ENCODE measurements at regions of chr1 and their contacts with region 1.

Region 1: DNA sequence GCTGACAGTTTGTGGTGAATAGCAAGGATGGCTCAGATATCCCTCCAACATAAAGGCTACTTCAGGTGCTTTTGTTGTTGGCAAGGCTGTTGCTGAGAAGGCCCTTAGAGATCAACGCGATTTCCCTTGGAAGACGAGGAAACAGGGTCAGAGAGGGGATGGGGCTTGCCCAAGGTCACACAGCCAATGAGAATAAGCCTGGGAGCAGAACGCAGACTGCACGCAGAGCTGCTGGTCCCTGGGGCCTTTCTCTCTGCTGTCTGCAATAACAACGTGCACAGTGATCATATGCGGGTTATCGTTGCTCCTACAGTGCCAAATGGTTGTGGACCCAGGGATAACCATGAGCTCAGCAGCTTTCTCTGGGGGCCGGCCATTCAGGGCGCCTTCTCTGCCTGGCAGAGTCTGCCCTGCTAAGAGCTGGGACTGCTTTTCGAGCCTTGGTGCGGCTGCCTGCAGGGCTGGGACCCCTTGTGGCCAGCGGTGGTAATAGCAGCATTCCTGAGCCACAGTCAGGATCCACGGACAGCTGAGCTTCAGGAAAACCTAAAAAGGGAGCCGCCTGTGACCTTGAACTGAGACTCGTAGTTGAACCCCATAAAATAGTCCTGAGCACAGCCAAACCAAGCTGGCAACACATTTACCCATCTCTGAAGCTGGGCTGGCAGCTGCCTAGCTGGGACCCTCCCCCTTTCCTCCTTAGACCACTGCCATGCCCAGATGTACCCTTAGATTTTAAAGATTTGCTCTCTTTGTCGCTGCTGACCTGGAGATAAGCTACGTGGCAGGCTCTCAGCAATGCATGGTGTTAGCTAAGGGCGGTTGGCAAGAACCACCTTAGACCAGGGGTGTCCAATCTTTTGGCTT is 39.8 kb downstream of the HTR6 start:
- DNase-seq: peak; percentile 4
- H3K4me3 ChIP-seq: no peak overlapping the region
- H3K27me3 ChIP-seq: no peaks in the 10 kb centered on the region
- CTCF ChIP-seq: peak; percentile 97

Region 2: GRCh38 chr1:19661721-19662228 is 42.7 kb before region 1 on chr1:
- CTCF ChIA-PET with region 1: interaction called, 162 read pairs
- POLR2A ChIA-PET with region 1: no interaction called
- DNase-seq: no peak
- H3K4me3 ChIP-seq: no peak overlapping the region
- H3K27me3 ChIP-seq: peaks cover 21% of the 10 kb centered on the region
- CTCF ChIP-seq: peak; percentile 65

Region 3: GRCh38 chr1:19676438-19676922 is 28.0 kb before region 1 on chr1:
- CTCF ChIA-PET with region 1: interaction called, 19 read pairs
- POLR2A ChIA-PET with region 1: no interaction called
- DNase-seq: no peak
- H3K4me3 ChIP-seq: no peak overlapping the region
- H3K27me3 ChIP-seq: peaks cover 4% of the 10 kb centered on the region; the same call in 1 of the 2 replicates
- CTCF ChIP-seq: no peak

Region 4: GRCh38 chr1:19688041-19688842 is 16.2 kb before region 1 on chr1:
- CTCF ChIA-PET with region 1: interaction called, 65 read pairs
- POLR2A ChIA-PET with region 1: interaction called, 4 read pairs
- DNase-seq: no peak
- H3K4me3 ChIP-seq: no peak overlapping the region
- H3K27me3 ChIP-seq: no peaks in the 10 kb centered on the region
- CTCF ChIP-seq: no peak

Region 5: DNA sequence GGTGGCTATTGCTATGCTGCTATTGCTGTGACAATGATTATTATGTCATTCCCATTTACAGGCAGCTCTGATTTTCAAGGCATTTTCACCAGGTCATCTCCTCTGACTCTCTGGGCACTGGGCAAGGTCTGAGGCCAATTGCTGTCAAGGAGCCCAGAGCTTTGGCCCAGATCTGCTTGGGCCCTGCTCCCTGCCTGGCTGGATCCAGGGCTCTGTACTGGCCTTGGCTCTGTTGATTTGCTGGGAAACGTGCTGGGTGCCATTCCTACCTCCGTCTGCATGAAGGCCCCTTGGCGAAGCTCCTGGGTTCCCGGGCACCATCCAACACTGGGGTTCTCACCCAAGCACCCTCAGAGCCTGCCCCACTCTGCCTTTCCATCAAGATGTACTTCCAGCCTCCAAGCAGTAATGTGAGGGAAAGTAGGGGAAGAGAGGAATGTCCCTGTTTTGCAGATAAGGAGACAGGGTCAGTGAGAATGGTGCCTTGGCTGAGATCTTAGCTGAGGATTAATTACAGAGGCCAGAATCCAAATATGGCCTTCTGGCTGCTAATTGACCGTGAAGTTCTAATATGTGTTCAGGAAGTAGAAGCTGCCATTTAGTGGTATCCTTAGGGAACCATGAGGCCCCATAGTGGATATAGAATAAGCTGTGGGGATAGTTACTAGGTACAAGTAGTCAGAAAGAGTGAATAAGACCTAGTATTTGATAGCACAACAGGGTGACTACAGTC is 24.1 kb after region 1 on chr1:
- CTCF ChIA-PET with region 1: interaction called, 13 read pairs
- POLR2A ChIA-PET with region 1: no interaction called
- DNase-seq: no peak
- H3K4me3 ChIP-seq: no peak overlapping the region
- H3K27me3 ChIP-seq: no peaks in the 10 kb centered on the region
- CTCF ChIP-seq: no peak

Region 6: GRCh38 chr1:19786988-19787423 is 82.5 kb after region 1 on chr1:
- CTCF ChIA-PET with region 1: no interaction called
- POLR2A ChIA-PET with region 1: no interaction called
- DNase-seq: no peak
- H3K4me3 ChIP-seq: no peak overlapping the region
- H3K27me3 ChIP-seq: no peaks in the 10 kb centered on the region
- CTCF ChIP-seq: no peak

Region 7: GRCh38 chr1:20037877-20038276 is 333.4 kb after region 1 on chr1:
- CTCF ChIA-PET with region 1: no interaction called
- POLR2A ChIA-PET with region 1: no interaction called
- DNase-seq: no peak
- H3K4me3 ChIP-seq: no peak overlapping the region
- H3K27me3 ChIP-seq: 0 out of 2 replicates have a peak, but pooled peaks cover 2% of the 10 kb centered on the region
- CTCF ChIP-seq: no peak

Measured in BJ (cell line).